Caco-2 (cell line): ENCODE measurements at regions of chr1 and their contacts with region 1.

Region 1: DNA sequence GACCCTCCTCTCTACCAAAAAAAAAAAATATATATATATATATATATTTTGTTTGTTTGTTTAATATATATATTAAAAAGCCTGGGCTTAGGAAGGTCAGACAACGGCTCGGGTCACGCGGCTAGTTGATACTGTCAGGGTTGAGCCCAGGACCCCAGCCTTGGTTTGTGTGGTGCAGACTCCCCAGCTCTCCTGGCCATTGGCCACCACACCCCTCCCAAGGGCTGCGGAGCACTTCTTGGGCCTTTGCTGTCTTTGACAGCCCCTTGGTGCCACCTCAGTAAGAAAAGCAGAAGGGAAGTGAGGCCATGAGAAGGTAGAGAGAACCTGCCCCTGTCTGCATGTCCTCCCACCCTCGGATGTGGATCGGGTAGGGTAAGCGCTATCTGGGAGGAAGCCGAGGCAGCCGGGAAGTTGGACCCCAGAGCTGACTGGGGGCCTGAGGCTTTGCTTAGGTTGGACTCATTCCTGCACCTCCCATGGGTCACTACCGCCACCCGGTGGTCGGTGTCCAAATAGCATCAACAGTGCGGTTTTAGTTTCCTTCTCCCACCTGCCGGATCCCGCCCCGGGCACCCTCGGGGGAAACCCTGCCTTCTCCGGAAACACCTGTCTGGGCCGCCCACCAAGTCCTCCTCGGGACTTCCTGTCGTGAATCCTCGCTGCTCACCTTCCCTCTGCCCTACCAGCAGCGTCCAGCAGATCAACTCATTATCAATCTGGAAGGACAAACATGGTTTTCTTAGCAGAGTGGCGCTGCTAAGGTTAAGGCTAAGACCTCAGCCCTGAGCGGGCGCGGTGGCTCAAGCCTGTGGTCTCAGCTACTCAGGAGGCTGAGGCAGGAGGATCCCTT is 29.8 kb upstream of the GNPAT start:
- DNase-seq: peak; percentile 95 to 97
- H3K4me3 ChIP-seq: peak overlapping the region; percentile 42
- H3K4me3 Mint-ChIP-seq: peak overlapping the region; percentile 79
- H3K27ac Mint-ChIP-seq: peak overlapping the region; percentile 90
- H3K4me1 ChIP-seq: peaks cover 39% of the 10 kb centered on the region
- H3K4me1 Mint-ChIP-seq: peaks cover 28% of the 10 kb centered on the region
- H3K27me3 ChIP-seq: no peaks in the 10 kb centered on the region
- H3K27me3 Mint-ChIP-seq: no peaks in the 10 kb centered on the region
- CTCF ChIP-seq: peak; percentile 90 to 97

Region 2: GRCh38 chr1:230867903-230868735 is 343.1 kb before region 1 on chr1 and contains the start of gene C1orf198:
- CTCF ChIA-PET with region 1: no interaction called
- POLR2A ChIA-PET with region 1: no interaction called
- intact Hi-C with region 1: loop called (anchors 10 kb)
- DNase-seq: peak; percentile 81 to 87
- H3K4me3 ChIP-seq: peak within 1 kb of the TSS; percentile 90
- H3K4me3 Mint-ChIP-seq: peak within 1 kb of the TSS; percentile 81
- H3K27ac Mint-ChIP-seq: peak within 1 kb of the TSS; percentile 97
- H3K4me1 ChIP-seq: peaks cover 35% of the 10 kb centered on the region
- H3K4me1 Mint-ChIP-seq: peaks cover 42% of the 10 kb centered on the region
- H3K27me3 ChIP-seq: no peaks in the 10 kb centered on the region
- H3K27me3 Mint-ChIP-seq: no peaks in the 10 kb centered on the region
- CTCF ChIP-seq: no peak
- total RNA-seq, gene C1orf198: 80.1 and 92.2 TPM in 2 replicates

Region 3: DNA sequence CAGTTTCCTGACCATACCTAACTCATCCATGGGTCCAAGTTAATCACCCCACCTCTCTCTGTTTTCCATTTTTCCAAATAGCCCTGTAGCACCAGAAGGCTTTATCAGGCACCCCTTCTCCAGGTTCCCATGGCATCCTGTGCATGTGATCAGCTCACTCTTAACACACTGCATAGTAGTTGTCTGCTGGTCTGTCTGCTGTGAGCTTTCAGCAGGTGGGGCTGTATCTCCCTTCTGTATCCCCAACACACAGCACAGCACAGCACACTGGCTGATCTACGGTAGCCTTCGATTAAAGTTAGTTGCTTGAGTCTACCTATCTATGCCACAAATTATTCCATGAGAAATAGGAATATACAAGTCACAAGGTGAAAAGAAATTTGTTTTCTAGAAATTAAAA is 288.6 kb before region 1 on chr1:
- CTCF ChIA-PET with region 1: interaction called, 3 read pairs
- POLR2A ChIA-PET with region 1: no interaction called
- intact Hi-C with region 1: loop called (anchors 1 kb)
- DNase-seq: peak in 1 of 2 experiments; percentile 27
- H3K4me3 ChIP-seq: no peak overlapping the region
- H3K4me3 Mint-ChIP-seq: no peak overlapping the region
- H3K27ac Mint-ChIP-seq: peak overlapping the region; percentile 40
- H3K4me1 ChIP-seq: peaks cover 20% of the 10 kb centered on the region
- H3K4me1 Mint-ChIP-seq: peaks cover 22% of the 10 kb centered on the region
- H3K27me3 ChIP-seq: no peaks in the 10 kb centered on the region
- H3K27me3 Mint-ChIP-seq: no peaks in the 10 kb centered on the region
- CTCF ChIP-seq: peak in 1 of 2 experiments; percentile 44

Region 4: DNA sequence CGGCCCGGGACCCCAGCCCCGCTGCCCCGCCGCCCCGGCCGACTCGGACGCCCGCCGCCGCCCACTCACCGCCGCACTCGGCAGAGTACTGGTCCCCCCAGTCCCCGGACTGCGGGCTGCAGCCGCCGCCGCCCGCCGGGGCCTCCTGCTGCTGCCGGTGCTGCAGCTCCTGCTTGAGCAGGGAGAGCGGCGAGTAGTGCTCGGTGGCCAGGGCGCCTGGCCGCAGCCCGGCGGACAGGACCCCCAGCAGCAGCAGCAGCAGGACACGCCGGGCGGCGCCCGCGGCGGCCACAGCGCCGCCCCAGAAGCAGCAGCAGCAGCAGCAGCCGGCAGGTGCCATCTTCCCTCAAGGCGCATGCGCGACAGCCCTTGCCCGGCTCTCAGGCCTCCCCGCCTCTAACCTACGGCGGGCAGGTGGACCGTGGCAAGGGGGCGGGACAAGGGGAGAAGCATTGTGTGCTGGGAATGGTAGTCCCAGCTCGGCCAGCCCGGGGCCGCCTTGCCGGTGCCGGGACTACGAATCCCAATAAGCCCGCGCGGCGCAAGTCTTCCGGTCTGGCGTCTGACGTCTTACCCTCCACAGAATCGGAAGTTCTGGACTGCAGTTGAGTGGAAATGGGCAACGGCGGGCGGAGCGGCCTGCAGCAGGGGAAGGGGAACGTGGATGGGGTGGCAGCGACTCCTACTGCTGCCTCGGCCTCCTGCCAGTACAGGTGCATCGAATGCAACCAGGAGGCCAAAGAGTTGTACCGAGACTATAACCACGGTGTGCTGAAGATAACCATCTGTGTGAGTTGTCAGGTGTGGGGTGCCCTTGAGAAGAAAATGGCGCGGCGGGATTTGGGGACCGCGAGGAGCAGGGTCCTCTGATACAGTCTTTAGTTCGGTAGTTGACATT is 232.5 kb before region 1 on chr1 and contains the starts of genes ARV1 and TTC13:
- CTCF ChIA-PET with region 1: interaction called, 3 read pairs
- POLR2A ChIA-PET with region 1: no interaction called
- intact Hi-C with region 1: loop called (anchors 2 kb)
- DNase-seq: peak; percentile 99
- H3K4me3 ChIP-seq: peak within 1 kb of the TSS; percentile 96
- H3K4me3 Mint-ChIP-seq: no peak within 1 kb of the TSS
- H3K27ac Mint-ChIP-seq: peak within 1 kb of the TSS; percentile 65
- H3K4me1 ChIP-seq: peaks cover 18% of the 10 kb centered on the region
- H3K4me1 Mint-ChIP-seq: peaks cover 15% of the 10 kb centered on the region
- H3K27me3 ChIP-seq: no peaks in the 10 kb centered on the region
- H3K27me3 Mint-ChIP-seq: no peaks in the 10 kb centered on the region
- CTCF ChIP-seq: peak; percentile 59 to 84
- total RNA-seq, gene ARV1: 8.6 and 9.8 TPM in 2 replicates
- total RNA-seq, gene TTC13: 55.8 and 57.6 TPM in 2 replicates

Region 5: DNA sequence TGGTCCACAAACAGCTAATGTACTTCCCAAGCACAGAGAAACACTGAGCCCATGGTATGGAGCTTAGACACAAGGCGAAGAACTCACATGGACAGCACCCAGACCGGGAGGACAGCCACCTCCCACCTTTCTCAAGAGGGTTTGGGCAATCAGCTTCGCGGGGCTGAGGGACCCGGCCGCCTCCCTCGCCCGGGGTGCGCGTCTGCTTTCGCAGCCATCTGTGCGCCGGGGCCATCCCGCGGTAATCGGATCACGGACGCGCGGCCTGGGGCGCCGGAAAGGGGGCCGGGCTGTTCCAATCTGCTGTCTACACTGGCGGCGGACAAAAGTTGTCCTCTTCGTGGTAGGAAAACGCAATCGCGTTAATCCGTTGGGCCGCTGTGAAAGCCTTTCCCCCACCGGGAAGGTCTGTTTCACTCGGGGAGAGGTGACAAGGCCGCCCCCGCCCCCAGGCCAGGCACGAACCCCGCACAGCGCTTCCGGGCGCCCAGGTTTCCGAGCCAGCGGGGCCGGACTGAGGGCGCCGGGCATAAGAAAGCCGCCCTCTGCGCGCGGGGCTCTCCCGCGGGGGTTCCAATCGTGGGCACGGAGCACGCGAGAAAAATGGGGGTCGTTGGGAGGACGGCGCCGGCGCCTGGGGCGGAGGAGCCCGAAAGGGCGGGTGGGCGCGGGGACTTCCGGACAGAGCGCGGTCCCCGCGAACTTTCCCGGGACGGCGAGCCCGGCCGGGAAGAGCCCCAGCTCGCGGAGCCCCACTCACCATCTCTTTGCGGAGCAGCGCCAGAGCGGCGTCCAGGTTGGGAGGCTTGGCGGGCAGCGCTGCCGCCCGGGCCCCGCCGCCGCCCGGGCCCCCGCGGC is 171.8 kb before region 1 on chr1:
- CTCF ChIA-PET with region 1: no interaction called
- POLR2A ChIA-PET with region 1: interaction called, 3 read pairs
- intact Hi-C with region 1: loop called (anchors 2 kb)
- DNase-seq: peak; percentile 51 to 64
- H3K4me3 ChIP-seq: peak overlapping the region; percentile 78
- H3K4me3 Mint-ChIP-seq: peak overlapping the region; percentile 81
- H3K27ac Mint-ChIP-seq: peak overlapping the region; percentile 55
- H3K4me1 ChIP-seq: peaks cover 26% of the 10 kb centered on the region
- H3K4me1 Mint-ChIP-seq: peaks cover 35% of the 10 kb centered on the region
- H3K27me3 ChIP-seq: no peaks in the 10 kb centered on the region
- H3K27me3 Mint-ChIP-seq: no peaks in the 10 kb centered on the region
- CTCF ChIP-seq: no peak

Region 6: GRCh38 chr1:231162297-231162969 is 48.8 kb before region 1 on chr1:
- CTCF ChIA-PET with region 1: no interaction called
- POLR2A ChIA-PET with region 1: no interaction called
- intact Hi-C with region 1: loop called (anchors 5 kb)
- DNase-seq: peak; percentile 54 to 85
- H3K4me3 ChIP-seq: peak overlapping the region; percentile 52
- H3K4me3 Mint-ChIP-seq: peak overlapping the region; percentile 67
- H3K27ac Mint-ChIP-seq: no peak overlapping the region
- H3K4me1 ChIP-seq: no peaks in the 10 kb centered on the region
- H3K4me1 Mint-ChIP-seq: peaks cover 10% of the 10 kb centered on the region
- H3K27me3 ChIP-seq: no peaks in the 10 kb centered on the region
- H3K27me3 Mint-ChIP-seq: no peaks in the 10 kb centered on the region
- CTCF ChIP-seq: no peak

Region 7: GRCh38 chr1:231232870-231233734 is 21.9 kb after region 1 on chr1:
- CTCF ChIA-PET with region 1: interaction called, 3 read pairs
- POLR2A ChIA-PET with region 1: no interaction called
- intact Hi-C with region 1: loop called (anchors 1 kb)
- DNase-seq: peak in 1 of 2 experiments; percentile 56
- H3K4me3 ChIP-seq: no peak overlapping the region
- H3K4me3 Mint-ChIP-seq: peak overlapping the region; percentile 71
- H3K27ac Mint-ChIP-seq: peak overlapping the region; percentile 96
- H3K4me1 ChIP-seq: peaks cover 49% of the 10 kb centered on the region
- H3K4me1 Mint-ChIP-seq: peaks cover 40% of the 10 kb centered on the region
- H3K27me3 ChIP-seq: no peaks in the 10 kb centered on the region
- H3K27me3 Mint-ChIP-seq: no peaks in the 10 kb centered on the region
- CTCF ChIP-seq: no peak